OCI-LY7 (cell line): ENCODE measurements at regions of chr1 and their contacts with region 1.

Region 1: GRCh38 chr1:158124999-158125398 is 55.7 kb upstream of the CD1D start:
- DNase-seq: peak; percentile 86
- H3K4me3 ChIP-seq: no peak overlapping the region
- H3K27ac ChIP-seq: no peak overlapping the region
- H3K4me1 ChIP-seq: no peaks in the 10 kb centered on the region
- CTCF ChIP-seq: peak; percentile 92

Region 2: DNA sequence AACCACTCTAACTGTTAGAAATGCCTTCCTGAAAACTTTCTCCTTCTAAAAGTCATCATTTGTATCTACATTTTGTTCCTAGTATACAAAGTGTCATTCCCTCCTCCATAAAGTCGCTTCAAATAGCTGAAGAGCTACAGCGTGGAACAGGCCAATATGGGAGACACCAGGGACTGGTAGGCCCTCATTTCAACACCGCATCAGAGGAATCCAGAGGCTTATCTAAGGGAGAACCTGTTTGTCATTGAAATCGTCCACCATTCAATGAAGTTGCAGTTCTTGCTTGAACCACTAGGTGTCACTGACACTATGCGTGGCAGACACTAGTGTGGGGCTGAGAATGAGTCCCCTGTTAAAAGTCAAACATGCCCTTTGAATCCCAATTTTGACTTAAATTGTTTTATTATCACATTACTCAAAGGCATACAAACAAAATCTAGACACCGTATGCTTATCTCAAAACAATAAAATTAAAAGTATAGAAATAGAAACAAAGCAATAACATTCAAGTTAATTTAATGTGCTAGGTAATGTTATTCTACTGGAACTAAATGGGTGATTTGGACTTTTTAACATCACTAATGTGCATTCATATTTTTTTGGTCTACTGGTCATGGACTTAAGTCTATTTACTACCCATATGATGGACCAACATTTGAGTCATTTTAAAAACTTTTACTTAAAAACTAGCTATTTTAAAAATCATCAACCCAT is 755.0 kb before region 1 on chr1:
- CTCF ChIA-PET with region 1: no interaction called
- POLR2A ChIA-PET with region 1: no interaction called
- intact Hi-C with region 1: loop called (anchors 10 kb)
- DNase-seq: peak; percentile 71
- H3K4me3 ChIP-seq: no peak overlapping the region
- H3K27ac ChIP-seq: no peak overlapping the region
- H3K4me1 ChIP-seq: no peaks in the 10 kb centered on the region
- CTCF ChIP-seq: peak; percentile 93

Region 3: GRCh38 chr1:157963713-157964112 is 161.3 kb before region 1 on chr1:
- CTCF ChIA-PET with region 1: interaction called, 5 read pairs
- POLR2A ChIA-PET with region 1: no interaction called
- intact Hi-C with region 1: loop called (anchors 1 kb)
- DNase-seq: peak; percentile 71
- H3K4me3 ChIP-seq: no peak overlapping the region
- H3K27ac ChIP-seq: no peak overlapping the region
- H3K4me1 ChIP-seq: peaks cover 3% of the 10 kb centered on the region
- CTCF ChIP-seq: peak; percentile 88

Region 4: DNA sequence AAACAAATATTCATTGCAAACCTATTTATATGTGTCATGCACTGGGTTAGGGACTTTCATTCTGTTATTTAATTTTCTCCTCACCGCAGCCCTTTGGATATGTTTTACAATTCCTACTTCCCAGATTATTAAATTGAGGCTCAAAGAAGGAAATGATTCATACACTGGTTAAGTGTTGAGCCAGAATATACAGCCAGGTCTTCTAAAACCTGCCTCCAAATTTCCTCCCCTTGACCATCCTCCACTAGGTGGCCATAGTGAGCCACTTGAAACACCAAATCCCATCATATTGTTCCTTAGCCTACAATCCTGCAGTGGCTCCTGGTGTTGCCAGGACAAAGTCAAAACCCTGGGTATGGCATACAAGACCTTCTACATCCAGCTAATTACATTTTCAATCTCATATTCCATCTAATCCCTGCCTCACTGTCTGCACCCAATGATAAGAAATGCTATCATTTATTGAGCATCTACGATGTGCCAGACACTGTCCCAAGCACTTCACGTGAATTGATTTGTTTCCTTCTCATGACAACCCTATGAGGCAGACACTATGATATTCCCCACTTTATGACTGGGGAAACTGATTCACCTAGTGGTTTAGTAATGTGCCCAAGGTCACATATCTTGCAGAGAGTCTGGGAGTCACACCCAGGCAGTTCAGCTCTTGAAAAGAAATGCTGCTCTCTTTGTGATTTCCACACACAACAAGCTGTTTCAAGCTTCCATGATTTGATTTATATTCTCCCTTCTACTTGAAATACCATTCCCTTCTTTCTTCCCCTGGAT is 155.1 kb before region 1 on chr1:
- CTCF ChIA-PET with region 1: no interaction called
- POLR2A ChIA-PET with region 1: interaction called, 3 read pairs
- intact Hi-C with region 1: loop called (anchors 2 kb)
- DNase-seq: peak; percentile 34
- H3K4me3 ChIP-seq: no peak overlapping the region
- H3K27ac ChIP-seq: no peak overlapping the region
- H3K4me1 ChIP-seq: no peaks in the 10 kb centered on the region
- CTCF ChIP-seq: peak; percentile 90

Region 5: GRCh38 chr1:157992031-157992832 is 132.8 kb before region 1 on chr1:
- CTCF ChIA-PET with region 1: interaction called, 12 read pairs
- POLR2A ChIA-PET with region 1: no interaction called
- intact Hi-C with region 1: loop called (anchors 1 kb)
- DNase-seq: peak; percentile 53
- H3K4me3 ChIP-seq: no peak overlapping the region
- H3K27ac ChIP-seq: no peak overlapping the region
- H3K4me1 ChIP-seq: no peaks in the 10 kb centered on the region
- CTCF ChIP-seq: peak; percentile 95

Region 6: DNA sequence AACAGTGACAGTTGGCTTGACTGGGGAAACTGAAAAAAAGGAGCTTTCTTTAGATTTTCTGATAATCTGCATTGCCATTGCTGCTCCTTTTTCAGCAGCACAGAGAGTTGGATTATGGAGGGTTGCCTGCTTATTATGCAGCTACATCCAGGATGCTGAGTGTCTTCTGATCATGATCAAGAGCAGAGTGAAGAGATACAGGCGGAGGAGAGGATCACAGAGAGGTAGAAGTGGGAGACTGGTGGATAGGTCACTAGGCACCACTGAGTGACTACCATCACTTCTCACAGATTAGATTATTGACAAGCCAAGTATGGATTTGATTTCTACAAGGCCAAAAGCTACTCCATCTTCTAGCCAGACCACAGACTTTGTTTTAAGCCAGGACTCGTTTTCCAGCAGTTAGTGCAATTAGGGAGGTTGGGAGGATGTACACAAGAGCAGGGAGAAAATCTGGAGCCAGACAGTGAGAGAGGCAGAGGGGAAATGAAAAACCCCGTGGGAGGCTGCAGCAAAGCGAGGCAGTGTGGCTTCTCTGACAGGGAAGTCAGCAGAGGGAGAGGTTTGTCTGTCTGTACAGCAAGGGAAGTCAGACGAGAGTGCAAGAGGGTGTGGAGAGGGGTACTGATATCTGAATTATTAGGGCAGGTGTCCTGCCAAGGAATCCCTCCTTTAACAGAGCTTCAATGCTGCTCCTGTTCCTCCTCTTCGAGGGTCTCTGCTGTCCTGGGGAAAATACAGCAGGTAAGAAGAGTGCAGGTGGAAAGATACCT is 228.5 kb after region 1 on chr1 and contains the start of gene CD1E:
- CTCF ChIA-PET with region 1: no interaction called
- POLR2A ChIA-PET with region 1: no interaction called
- intact Hi-C with region 1: no loop called
- DNase-seq: no peak
- H3K4me3 ChIP-seq: no peak within 1 kb of the TSS
- H3K27ac ChIP-seq: no peak within 1 kb of the TSS
- H3K4me1 ChIP-seq: no peaks in the 10 kb centered on the region
- CTCF ChIP-seq: no peak
- total RNA-seq, gene CD1E: not detected in 2 replicates

Region 7: GRCh38 chr1:159250638-159251216 is 1125.7 kb after region 1 on chr1:
- CTCF ChIA-PET with region 1: no interaction called
- POLR2A ChIA-PET with region 1: no interaction called
- intact Hi-C with region 1: no loop called
- DNase-seq: no peak
- H3K4me3 ChIP-seq: no peak overlapping the region
- H3K27ac ChIP-seq: no peak overlapping the region
- H3K4me1 ChIP-seq: no peaks in the 10 kb centered on the region
- CTCF ChIP-seq: no peak